IMR-90 (cell line): ENCODE measurements at regions of chr11 and their contacts with region 1.

Region 1: DNA sequence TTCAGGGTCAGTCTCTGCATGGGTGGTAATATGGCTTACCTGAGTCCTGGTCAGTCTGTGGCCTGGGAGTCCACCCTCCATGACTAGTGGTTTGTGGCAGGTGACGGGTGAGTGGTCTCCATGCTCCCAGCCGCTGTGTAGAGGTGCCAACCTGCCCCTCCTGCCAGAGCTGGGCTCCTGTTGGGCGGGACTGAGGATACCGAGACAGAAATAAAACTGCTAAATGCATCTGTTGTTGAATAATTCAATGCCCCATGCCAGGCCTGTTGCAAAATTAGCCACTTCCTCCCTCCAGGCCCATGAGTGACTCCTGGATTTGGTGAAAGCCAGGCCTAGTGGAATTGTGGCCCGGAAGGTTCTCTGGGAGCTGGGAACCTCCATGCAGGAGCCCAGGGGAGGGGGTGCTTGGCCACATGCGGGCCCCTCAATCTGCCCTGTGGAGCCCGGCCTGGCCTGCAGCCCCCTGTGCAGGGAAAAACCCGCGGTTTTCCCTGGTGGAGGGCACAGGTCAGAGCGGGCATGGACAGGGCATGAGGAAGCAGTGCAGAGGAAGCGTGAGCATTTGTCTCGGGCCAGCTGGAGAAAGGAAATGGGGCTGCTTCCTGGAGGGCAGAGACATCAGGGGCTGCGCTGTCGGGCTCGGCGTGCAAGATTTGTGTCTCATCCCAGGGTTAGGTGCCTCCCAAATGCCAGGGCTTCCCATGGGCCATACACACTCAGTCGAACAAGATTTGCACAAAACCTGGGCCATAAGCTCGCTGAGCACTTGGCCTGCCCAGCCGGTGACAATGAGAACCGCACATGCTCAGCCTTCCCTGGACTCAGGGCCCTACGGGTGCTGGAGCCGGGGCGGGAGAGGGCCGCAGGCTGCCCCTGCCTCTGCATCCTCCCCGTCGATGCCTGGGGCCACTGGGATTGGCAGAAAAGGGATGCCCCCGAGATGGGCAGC is 66.9 kb downstream of the KCNQ1 start:
- DNase-seq: no peak
- ATAC-seq: no peak
- H3K4me3 ChIP-seq: no peak overlapping the region
- H3K27ac ChIP-seq: no peak overlapping the region
- H3K4me1 ChIP-seq: no peaks in the 10 kb centered on the region
- H3K27me3 ChIP-seq: peaks cover 52% of the 10 kb centered on the region
- CTCF ChIP-seq: no peak
- POLR2A ChIP-seq: no peak
- RAD21 ChIP-seq: no peak

Region 2: DNA sequence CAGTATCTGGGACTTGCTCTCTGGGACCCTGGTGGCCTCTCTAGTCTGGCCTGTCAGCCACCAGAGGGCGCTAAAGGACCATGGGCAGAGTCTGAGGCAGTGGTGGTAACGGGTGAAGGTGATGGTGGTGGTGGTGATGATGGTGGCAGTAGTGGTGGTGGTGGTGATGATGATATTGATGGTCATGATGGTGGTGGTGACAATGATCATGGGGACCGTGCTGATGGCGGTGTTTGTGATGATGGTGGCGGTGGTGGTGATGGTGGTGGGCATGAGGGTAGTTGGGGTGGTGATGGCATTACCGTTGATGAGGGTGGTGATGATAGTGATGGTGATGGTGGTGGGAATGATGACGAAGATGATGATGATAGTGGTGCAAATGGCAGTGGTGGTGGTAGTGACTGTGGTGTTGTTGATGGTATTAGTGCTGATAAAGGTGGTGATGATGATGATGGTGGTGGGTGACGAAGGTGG is 83.3 kb before region 1 on chr11:
- CTCF ChIA-PET with region 1: no interaction called
- POLR2A ChIA-PET with region 1: no interaction called
- dilution Hi-C with region 1: no loop called
- in situ Hi-C with region 1: loop called (anchors 10 kb)
- intact Hi-C with region 1: no loop called
- DNase-seq: peak; percentile 34
- ATAC-seq: peak; percentile 88
- H3K4me3 ChIP-seq: no peak overlapping the region
- H3K27ac ChIP-seq: no peak overlapping the region
- H3K4me1 ChIP-seq: no peaks in the 10 kb centered on the region
- H3K27me3 ChIP-seq: peaks cover 11% of the 10 kb centered on the region; the same call in 1 of the 2 replicates
- CTCF ChIP-seq: peak; percentile 83
- POLR2A ChIP-seq: no peak
- RAD21 ChIP-seq: peak; percentile 84